ENCODE measurements at regions of chr13 and their contacts with region 1.

Region 1: DNA sequence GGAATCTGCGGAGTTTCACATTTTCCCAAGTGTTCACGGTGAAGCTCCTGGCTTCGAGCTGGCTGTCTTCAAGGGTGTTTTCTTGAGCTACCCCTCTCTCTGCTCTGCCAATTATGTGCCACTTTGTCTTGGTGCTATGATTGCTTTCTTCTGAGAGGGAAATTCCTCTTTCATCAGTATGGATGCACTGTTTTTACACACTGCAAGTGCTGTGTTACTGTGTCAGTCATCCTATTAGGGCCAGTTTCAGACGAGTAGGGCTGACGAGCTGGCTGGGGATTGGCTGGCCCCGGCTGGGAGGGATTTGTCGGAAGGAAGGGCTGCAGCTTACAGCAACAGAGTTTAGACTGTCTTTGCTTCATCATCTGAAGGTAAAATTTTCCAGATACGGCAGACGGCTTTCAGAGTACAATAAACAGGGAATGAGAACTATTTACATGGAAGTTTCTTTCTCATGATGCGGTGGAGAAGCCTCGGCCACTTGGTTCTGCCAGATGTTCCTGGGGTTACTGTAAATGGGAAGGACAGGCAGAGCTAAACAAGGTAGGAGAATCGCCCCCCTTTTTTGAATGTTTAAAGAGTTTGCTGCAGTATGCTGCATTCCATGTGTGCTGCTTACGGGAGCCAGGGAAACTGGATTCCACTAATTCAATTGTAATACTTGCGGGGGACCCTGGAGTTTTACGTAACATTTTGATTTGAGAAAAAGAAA is at the start of gene MBNL2:
- DNase-seq: peak; percentile 92
- H3K27ac ChIP-seq: peak within 1 kb of the TSS; percentile 80
- CTCF ChIP-seq: no peak

Region 2: GRCh38 chr13:97125810-97126738 is 96.1 kb before region 1 on chr13:
- CTCF ChIA-PET with region 1: no interaction called
- POLR2A ChIA-PET with region 1: interaction called, 10 read pairs
- DNase-seq: peak; percentile 69
- H3K27ac ChIP-seq: peak overlapping the region; percentile 88
- CTCF ChIP-seq: no peak

Region 3: GRCh38 chr13:97174638-97175037 is 47.5 kb before region 1 on chr13:
- CTCF ChIA-PET with region 1: no interaction called
- POLR2A ChIA-PET with region 1: no interaction called
- DNase-seq: no peak
- H3K27ac ChIP-seq: no peak overlapping the region
- CTCF ChIP-seq: no peak

Region 4: DNA sequence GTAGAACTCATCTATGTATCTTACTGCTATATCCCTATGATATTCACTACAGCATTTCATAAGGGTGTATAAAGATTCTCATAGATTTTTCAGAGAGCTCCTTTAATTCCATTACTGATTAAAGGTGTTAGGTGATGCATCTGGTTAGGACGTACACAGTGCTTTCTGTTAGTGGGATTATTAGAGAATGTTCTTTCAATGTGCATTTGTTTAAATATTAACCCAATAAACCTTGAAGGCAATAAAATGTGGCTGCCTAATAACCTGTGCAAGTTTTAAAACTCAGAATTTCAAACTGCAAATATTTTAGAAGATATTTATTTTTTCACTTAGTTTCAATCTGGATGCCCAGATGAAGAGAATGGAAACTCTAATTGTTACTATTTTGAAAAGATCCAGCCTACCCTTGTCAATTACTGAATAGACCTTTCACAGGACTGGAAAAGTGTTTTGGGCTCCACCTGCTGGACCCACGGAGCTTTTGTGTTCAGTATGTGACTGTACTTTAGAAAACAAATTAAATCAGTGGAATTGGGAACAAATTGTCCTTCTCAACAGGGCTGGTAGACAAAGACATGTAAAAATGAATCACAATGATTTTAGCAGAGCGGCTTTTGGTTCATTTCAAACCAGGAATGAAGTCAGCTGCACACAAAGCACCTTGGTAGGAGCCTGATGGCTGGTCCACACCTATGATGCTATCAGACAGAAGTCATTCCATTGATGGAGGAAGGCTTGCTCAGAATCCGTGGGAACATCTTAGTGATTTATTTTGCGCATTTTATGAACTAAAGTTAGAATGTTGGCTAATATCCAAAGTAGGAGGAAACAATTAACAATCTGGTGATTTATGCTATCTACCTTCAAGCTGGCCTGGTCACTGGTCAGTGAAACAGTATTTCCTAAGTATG is 122.4 kb after region 1 on chr13:
- CTCF ChIA-PET with region 1: interaction called, 10 read pairs
- POLR2A ChIA-PET with region 1: no interaction called
- DNase-seq: peak; percentile 50
- H3K27ac ChIP-seq: no peak overlapping the region
- CTCF ChIP-seq: peak; percentile 79